ENCODE measurements at regions of chr3 and their contacts with region 1.

Region 1: GRCh38 chr3:138850151-138850550 is 15.4 kb upstream of the PIK3CB start:
- DNase-seq: no peak
- H3K4me3 Mint-ChIP-seq: no peak overlapping the region
- H3K27ac Mint-ChIP-seq: no peak overlapping the region
- H3K4me1 Mint-ChIP-seq: no peaks in the 10 kb centered on the region
- H3K27me3 Mint-ChIP-seq: no peaks in the 10 kb centered on the region
- CTCF ChIP-seq: no peak

Region 2: GRCh38 chr3:137946345-137946973 is 903.7 kb before region 1 on chr3:
- CTCF ChIA-PET with region 1: no interaction called
- intact Hi-C with region 1: no loop called
- DNase-seq: peak; percentile 84
- H3K4me3 Mint-ChIP-seq: no peak overlapping the region
- H3K27ac Mint-ChIP-seq: no peak overlapping the region
- H3K4me1 Mint-ChIP-seq: peaks cover 7% of the 10 kb centered on the region
- H3K27me3 Mint-ChIP-seq: peaks cover 32% of the 10 kb centered on the region
- CTCF ChIP-seq: peak; percentile 89

Region 3: DNA sequence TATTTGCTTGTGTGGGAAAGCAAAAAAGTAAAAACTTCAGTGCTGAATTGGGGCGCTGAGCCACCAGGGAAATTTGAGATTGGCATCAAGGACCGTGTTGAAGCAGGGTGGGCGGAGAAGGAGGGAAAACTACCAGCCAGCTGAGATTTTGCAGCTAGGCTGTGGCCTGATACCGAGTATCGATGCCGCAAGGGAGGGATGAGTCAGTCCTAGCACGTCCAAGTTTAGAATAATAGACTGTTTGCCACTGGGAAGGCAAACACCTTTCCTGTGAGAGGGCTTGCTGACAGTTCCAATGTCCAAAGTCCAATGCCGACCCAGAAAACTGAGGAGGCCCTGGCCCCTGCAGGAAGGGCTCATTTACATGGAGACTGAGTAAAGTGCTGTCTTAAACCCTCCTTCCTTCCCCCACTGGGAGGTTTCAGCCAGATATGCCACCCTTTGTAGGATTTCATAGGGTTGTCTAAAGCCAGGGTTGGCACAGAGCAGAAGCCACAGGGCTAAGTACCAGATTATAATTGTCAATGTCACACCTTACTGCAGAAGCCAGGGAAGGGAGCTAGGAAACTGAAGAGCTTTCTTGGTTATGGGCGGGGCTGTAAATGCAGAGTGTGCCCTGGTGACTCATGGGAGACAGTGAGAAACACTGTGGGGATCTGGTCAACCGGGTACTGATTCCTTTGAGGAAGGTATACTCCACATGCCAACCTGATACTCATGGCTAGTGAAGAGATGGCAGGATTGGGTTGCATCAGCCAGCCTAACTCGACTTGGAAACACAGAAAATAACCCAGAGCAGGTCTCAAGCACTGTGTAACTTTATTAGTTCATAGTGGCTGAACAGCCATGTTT is 13.0 kb after region 1 on chr3:
- CTCF ChIA-PET with region 1: interaction called, 10 read pairs
- intact Hi-C with region 1: no loop called
- DNase-seq: peak; percentile 87
- H3K4me3 Mint-ChIP-seq: peak overlapping the region; percentile 52
- H3K27ac Mint-ChIP-seq: peak overlapping the region; percentile 94
- H3K4me1 Mint-ChIP-seq: peaks cover 34% of the 10 kb centered on the region
- H3K27me3 Mint-ChIP-seq: no peaks in the 10 kb centered on the region
- CTCF ChIP-seq: no peak

Region 4: GRCh38 chr3:138875754-138876664 is 25.9 kb after region 1 on chr3:
- CTCF ChIA-PET with region 1: no interaction called
- intact Hi-C with region 1: no loop called
- DNase-seq: no peak
- H3K4me3 Mint-ChIP-seq: no peak overlapping the region
- H3K27ac Mint-ChIP-seq: no peak overlapping the region
- H3K4me1 Mint-ChIP-seq: no peaks in the 10 kb centered on the region
- H3K27me3 Mint-ChIP-seq: no peaks in the 10 kb centered on the region
- CTCF ChIP-seq: no peak